ENCODE measurements at regions of chr6 and their contacts with region 1.

Region 1: DNA sequence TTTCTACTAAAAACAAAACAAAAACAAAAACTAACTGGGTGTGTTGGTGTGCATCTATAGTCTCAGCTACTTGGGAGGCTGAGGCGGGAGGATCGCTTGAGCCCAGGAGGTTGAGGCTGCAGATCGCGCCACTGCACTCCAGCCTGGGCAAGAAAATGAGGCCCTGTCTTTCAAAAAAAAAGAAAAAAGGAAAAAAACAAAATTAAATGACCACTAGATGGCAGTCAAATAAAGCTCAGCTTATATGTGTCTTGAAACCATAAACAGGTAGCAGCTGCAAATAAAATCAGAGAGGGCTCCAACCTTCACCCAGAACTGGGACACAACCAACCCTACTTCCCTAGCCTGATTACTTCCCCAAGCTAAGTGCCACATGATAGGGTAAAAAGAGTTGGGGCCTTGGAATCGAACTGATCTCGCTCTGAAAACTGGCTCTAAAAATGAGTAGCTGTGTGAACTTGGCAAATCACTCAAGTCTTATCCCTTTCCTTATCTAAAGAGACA is 67.1 kb upstream of the ADGRF4 start:
- DNase-seq: peak; percentile 19 to 58 (median 50)
- H3K4me3 ChIP-seq: no peak overlapping the region
- H3K4me3 Mint-ChIP-seq: no peak overlapping the region
- H3K27ac ChIP-seq: no peak overlapping the region
- H3K27ac Mint-ChIP-seq: peak overlapping the region in 4 of 7 donors; percentile 25 to 58 (median 44)
- H3K4me1 ChIP-seq: peaks cover 12% of the 10 kb centered on the region
- H3K4me1 Mint-ChIP-seq: peaks cover 7 to 12% (median 10%) of the 10 kb centered on the region in 4 donors
- H3K27me3 ChIP-seq: no peaks in the 10 kb centered on the region
- H3K27me3 Mint-ChIP-seq: no peaks in the 10 kb centered on the region

Region 2: DNA sequence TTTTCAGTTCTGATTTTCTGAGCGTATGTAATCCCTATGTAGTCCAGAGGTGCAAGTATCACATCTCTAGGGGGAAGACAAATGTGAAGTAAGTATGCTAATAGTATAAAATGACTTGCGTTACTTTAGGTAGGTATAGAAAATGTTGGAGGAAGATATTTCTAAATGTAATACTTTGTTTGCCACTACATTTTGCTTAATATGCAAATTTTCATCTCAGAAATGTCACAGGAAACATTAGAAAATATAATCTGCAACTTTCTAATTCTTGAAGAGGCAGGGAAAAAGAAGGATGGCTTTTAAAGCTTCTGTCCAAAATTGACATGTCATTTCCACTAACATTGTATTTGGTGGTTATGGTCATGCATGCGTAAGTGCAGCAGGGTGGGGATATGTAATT is 68.2 kb before region 1 on chr6:
- CTCF ChIA-PET with region 1: no interaction called
- POLR2A ChIA-PET with region 1: no interaction called
- intact Hi-C with region 1: no loop called
- DNase-seq: no peak
- H3K4me3 ChIP-seq: no peak overlapping the region
- H3K4me3 Mint-ChIP-seq: no peak overlapping the region
- H3K27ac ChIP-seq: no peak overlapping the region
- H3K27ac Mint-ChIP-seq: no peak overlapping the region
- H3K4me1 ChIP-seq: no peaks in the 10 kb centered on the region
- H3K4me1 Mint-ChIP-seq: peaks cover 5 to 12% (median 7%) of the 10 kb centered on the region in 4 donors
- H3K27me3 ChIP-seq: no peaks in the 10 kb centered on the region
- H3K27me3 Mint-ChIP-seq: no peaks in the 10 kb centered on the region

Region 3: GRCh38 chr6:47733879-47734558 is 102.7 kb after region 1 on chr6:
- CTCF ChIA-PET with region 1: interaction called, 20 read pairs
- POLR2A ChIA-PET with region 1: no interaction called
- intact Hi-C with region 1: loop called (anchors 1 kb)
- DNase-seq: peak in 3 of 5 donors; percentile 5 to 8 (median 7)
- H3K4me3 ChIP-seq: no peak overlapping the region
- H3K4me3 Mint-ChIP-seq: no peak overlapping the region
- H3K27ac ChIP-seq: no peak overlapping the region
- H3K27ac Mint-ChIP-seq: no peak overlapping the region
- H3K4me1 ChIP-seq: no peaks in the 10 kb centered on the region
- H3K4me1 Mint-ChIP-seq: peaks cover 0 to 2% (median 0%) of the 10 kb centered on the region in 4 donors
- H3K27me3 ChIP-seq: no peaks in the 10 kb centered on the region
- H3K27me3 Mint-ChIP-seq: peaks cover 1 to 4% of the 10 kb centered on the region in 2 donors

Region 4: GRCh38 chr6:47780510-47781356 is 149.4 kb after region 1 on chr6:
- CTCF ChIA-PET with region 1: interaction called, 55 read pairs
- POLR2A ChIA-PET with region 1: no interaction called
- intact Hi-C with region 1: loop called (anchors 1 kb)
- DNase-seq: peak in 4 of 5 donors; percentile 42 to 47 (median 43)
- H3K4me3 ChIP-seq: no peak overlapping the region
- H3K4me3 Mint-ChIP-seq: peak overlapping the region in 2 of 8 donors; percentile 38 to 53
- H3K27ac ChIP-seq: no peak overlapping the region
- H3K27ac Mint-ChIP-seq: peak overlapping the region in 2 of 7 donors; percentile 33 to 60
- H3K4me1 ChIP-seq: peaks cover 4% of the 10 kb centered on the region
- H3K4me1 Mint-ChIP-seq: peaks cover 6 to 8% (median 6%) of the 10 kb centered on the region in 4 donors
- H3K27me3 ChIP-seq: no peaks in the 10 kb centered on the region
- H3K27me3 Mint-ChIP-seq: peaks cover 0 to 7% of the 10 kb centered on the region in 2 donors

Region 5: GRCh38 chr6:49409951-49410542 is 1778.7 kb after region 1 on chr6:
- CTCF ChIA-PET with region 1: interaction called, 17 read pairs
- POLR2A ChIA-PET with region 1: no interaction called
- intact Hi-C with region 1: no loop called
- DNase-seq: peak; percentile 11 to 53 (median 31)
- H3K4me3 ChIP-seq: no peak overlapping the region
- H3K4me3 Mint-ChIP-seq: no peak overlapping the region
- H3K27ac ChIP-seq: no peak overlapping the region
- H3K27ac Mint-ChIP-seq: no peak overlapping the region
- H3K4me1 ChIP-seq: no peaks in the 10 kb centered on the region
- H3K4me1 Mint-ChIP-seq: no peaks in the 10 kb centered on the region
- H3K27me3 ChIP-seq: no peaks in the 10 kb centered on the region
- H3K27me3 Mint-ChIP-seq: peaks cover 3% of the 10 kb centered on the region in 2 donors

Measured in CD4-positive, alpha-beta memory T cell (primary cell).